ENCODE measurements at regions of chr2 and their contacts with region 1.

Region 1: DNA sequence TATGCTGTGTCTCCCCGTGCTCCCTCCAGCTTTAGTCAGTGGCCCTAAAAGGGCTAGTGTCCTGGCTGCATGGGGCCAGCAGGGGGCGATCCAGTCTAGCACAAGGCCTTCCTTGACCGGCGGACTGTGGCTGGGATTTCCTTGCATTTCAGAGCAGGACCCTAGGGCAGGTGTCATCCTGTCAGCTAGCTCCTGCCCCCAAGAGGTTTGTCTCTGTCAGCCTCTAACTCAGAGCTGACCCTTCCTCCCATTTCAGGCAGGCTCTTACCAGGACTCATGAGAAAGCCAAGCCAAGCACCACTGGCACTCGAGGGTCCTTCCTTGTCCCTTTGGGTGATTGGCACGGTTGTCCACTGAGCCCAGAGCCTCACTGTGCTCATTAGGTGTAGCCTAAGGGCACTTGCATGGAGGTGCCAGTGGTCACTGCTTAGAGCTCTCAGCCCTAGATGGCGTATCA is 140.3 kb downstream of the RPIA start:
- DNase-seq: peak; percentile 23
- H3K4me3 ChIP-seq: no peak overlapping the region
- H3K27ac ChIP-seq: no peak overlapping the region
- H3K4me1 ChIP-seq: peaks cover 22% of the 10 kb centered on the region
- H3K27me3 ChIP-seq: no peaks in the 10 kb centered on the region
- CTCF ChIP-seq: peak; percentile 56 to 78
- POLR2A ChIP-seq: no peak

Region 2: DNA sequence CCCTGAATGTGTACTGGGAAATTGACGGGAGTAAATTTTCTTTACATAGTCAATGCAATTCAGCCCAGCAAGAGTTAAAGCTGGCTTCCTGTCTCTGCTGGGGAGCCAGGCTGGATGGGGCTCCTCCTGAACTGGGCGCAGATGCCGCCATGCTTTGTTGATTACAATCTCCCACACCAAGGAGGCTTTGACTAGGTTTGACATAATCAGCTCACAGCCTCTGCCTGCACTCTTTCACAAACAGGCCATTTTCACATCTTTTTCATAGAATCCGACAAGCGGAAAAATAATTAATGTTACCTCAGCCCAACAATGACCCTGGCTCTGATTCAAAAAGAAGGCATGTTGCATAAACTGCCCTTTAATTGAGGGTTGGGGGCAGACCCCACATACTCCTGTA is 433.6 kb before region 1 on chr2:
- CTCF ChIA-PET with region 1: no interaction called
- POLR2A ChIA-PET with region 1: no interaction called
- dilution Hi-C with region 1: no loop called
- intact Hi-C with region 1: no loop called
- DNase-seq: no peak
- H3K4me3 ChIP-seq: no peak overlapping the region
- H3K27ac ChIP-seq: no peak overlapping the region
- H3K4me1 ChIP-seq: no peaks in the 10 kb centered on the region
- H3K27me3 ChIP-seq: no peaks in the 10 kb centered on the region
- CTCF ChIP-seq: no peak
- POLR2A ChIP-seq: no peak

Region 3: GRCh38 chr2:88739985-88740600 is 91.7 kb before region 1 on chr2:
- CTCF ChIA-PET with region 1: no interaction called
- POLR2A ChIA-PET with region 1: no interaction called
- dilution Hi-C with region 1: no loop called
- intact Hi-C with region 1: loop called (anchors 1 kb)
- DNase-seq: peak; percentile 82
- H3K4me3 ChIP-seq: no peak overlapping the region
- H3K27ac ChIP-seq: peak overlapping the region; percentile 16
- H3K4me1 ChIP-seq: peaks cover 31% of the 10 kb centered on the region
- H3K27me3 ChIP-seq: no peaks in the 10 kb centered on the region
- CTCF ChIP-seq: peak; percentile 85 to 87
- POLR2A ChIP-seq: no peak

Region 4: GRCh38 chr2:88753833-88754584 is 77.8 kb before region 1 on chr2:
- CTCF ChIA-PET with region 1: no interaction called
- POLR2A ChIA-PET with region 1: no interaction called
- dilution Hi-C with region 1: no loop called
- intact Hi-C with region 1: no loop called
- DNase-seq: peak; percentile 22
- H3K4me3 ChIP-seq: no peak overlapping the region
- H3K27ac ChIP-seq: no peak overlapping the region
- H3K4me1 ChIP-seq: no peaks in the 10 kb centered on the region
- H3K27me3 ChIP-seq: no peaks in the 10 kb centered on the region
- CTCF ChIP-seq: no peak
- POLR2A ChIP-seq: no peak

Region 5: DNA sequence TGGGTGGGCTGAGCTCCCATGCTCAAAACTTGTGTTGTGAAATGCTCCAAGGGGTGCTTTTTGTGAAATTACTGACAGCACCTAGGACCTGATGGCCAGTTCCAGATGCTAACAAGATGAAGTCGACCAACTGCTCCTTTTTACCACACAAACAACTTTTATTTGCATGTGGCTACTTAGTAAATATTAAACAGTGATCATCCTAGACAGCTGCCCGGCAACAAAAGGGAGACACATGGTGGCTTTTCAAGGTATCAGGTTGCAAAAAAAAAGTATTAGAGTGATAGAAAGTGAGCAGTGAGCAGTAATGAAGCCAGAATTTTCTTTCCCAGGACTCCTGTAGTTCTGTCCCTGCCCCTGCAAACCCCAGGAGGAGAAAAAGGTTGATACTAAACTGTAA is 21.8 kb before region 1 on chr2:
- CTCF ChIA-PET with region 1: interaction called, 9 read pairs
- POLR2A ChIA-PET with region 1: no interaction called
- dilution Hi-C with region 1: no loop called
- intact Hi-C with region 1: loop called (anchors 2 kb)
- DNase-seq: no peak
- H3K4me3 ChIP-seq: no peak overlapping the region
- H3K27ac ChIP-seq: no peak overlapping the region
- H3K4me1 ChIP-seq: peaks cover 3% of the 10 kb centered on the region
- H3K27me3 ChIP-seq: peaks cover 0 to 9% of the 10 kb centered on the region in 2 experiments
- CTCF ChIP-seq: no peak
- POLR2A ChIP-seq: no peak

Region 6: DNA sequence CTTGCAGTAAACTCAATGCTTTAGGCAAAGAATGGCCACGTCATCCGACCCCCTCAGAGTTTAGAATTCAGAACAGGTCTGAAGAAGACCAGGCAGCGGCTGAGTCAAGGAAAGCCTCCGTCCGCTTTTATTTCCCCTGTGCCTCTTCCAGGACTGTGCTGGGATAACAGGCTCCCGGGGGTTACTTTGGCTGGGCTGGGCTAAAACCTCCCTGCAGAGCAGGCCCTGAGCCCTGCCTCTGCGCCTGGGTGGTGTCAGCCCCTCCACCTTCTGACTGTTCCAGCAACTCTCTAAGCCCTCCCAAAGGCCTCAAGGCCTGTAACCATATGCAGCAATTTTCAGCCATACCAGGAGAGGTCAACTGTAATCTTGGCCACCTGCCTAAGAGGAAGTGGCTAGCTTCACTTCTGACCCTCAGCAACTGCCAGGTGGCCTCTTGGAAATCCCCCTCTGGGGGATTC is 26.2 kb after region 1 on chr2:
- CTCF ChIA-PET with region 1: interaction called, 13 read pairs
- POLR2A ChIA-PET with region 1: no interaction called
- dilution Hi-C with region 1: no loop called
- intact Hi-C with region 1: no loop called
- DNase-seq: peak; percentile 83
- H3K4me3 ChIP-seq: no peak overlapping the region
- H3K27ac ChIP-seq: no peak overlapping the region
- H3K4me1 ChIP-seq: peaks cover 6% of the 10 kb centered on the region
- H3K27me3 ChIP-seq: peaks cover 1 to 10% of the 10 kb centered on the region in 2 experiments
- CTCF ChIP-seq: no peak
- POLR2A ChIP-seq: no peak

Region 7: DNA sequence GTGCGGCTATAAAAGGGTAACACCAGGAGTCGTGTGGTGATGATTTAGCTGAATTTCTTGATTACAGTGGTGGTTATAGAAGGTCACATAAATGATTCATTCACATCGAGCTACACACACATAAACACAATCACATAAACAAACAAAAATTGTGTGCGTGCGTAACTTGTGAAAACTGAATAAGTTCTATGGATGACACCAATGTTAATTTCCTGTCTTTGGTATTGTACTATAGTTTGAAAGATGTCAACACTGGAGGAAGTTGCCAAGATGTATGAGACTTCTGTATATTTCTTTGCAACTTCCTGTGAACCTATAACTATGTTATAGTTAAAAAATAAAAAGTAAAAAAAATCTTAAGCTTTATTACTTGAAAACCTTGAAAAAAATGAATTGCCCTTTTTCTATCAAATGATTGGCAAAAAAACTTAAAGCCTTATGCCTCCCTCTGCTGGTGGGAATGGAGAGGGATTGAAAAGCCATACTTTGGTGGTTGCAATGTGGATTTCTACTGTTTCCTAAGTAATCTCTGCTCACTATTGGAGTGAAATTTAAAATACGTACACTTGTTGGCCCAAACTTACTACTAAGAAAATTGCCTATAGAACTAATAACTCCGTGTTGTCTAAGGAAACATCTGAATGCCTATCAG is 87.4 kb after region 1 on chr2:
- CTCF ChIA-PET with region 1: interaction called, 7 read pairs
- POLR2A ChIA-PET with region 1: no interaction called
- dilution Hi-C with region 1: no loop called
- intact Hi-C with region 1: loop called (anchors 1 kb)
- DNase-seq: peak; percentile 29
- H3K4me3 ChIP-seq: no peak overlapping the region
- H3K27ac ChIP-seq: no peak overlapping the region
- H3K4me1 ChIP-seq: no peaks in the 10 kb centered on the region
- H3K27me3 ChIP-seq: peaks cover 5 to 13% of the 10 kb centered on the region in 2 experiments
- CTCF ChIP-seq: peak; percentile 46 to 49
- POLR2A ChIP-seq: no peak

Region 8: GRCh38 chr2:89000235-89000634 is 168.4 kb after region 1 on chr2:
- CTCF ChIA-PET with region 1: no interaction called
- POLR2A ChIA-PET with region 1: no interaction called
- dilution Hi-C with region 1: no loop called
- intact Hi-C with region 1: no loop called
- DNase-seq: no peak
- H3K4me3 ChIP-seq: no peak overlapping the region
- H3K27ac ChIP-seq: no peak overlapping the region
- H3K4me1 ChIP-seq: no peaks in the 10 kb centered on the region
- H3K27me3 ChIP-seq: no peaks in the 10 kb centered on the region
- CTCF ChIP-seq: no peak
- POLR2A ChIP-seq: no peak

Measured in endothelial cell of umbilical vein (primary cell).